KBM-7 (cell line): ENCODE measurements at regions of chr1 and their contacts with region 1.

Region 1: GRCh38 chr1:94061513-94062443 is 59.2 kb downstream of the ABCA4 start:
- DNase-seq: peak; percentile 75

Region 2: DNA sequence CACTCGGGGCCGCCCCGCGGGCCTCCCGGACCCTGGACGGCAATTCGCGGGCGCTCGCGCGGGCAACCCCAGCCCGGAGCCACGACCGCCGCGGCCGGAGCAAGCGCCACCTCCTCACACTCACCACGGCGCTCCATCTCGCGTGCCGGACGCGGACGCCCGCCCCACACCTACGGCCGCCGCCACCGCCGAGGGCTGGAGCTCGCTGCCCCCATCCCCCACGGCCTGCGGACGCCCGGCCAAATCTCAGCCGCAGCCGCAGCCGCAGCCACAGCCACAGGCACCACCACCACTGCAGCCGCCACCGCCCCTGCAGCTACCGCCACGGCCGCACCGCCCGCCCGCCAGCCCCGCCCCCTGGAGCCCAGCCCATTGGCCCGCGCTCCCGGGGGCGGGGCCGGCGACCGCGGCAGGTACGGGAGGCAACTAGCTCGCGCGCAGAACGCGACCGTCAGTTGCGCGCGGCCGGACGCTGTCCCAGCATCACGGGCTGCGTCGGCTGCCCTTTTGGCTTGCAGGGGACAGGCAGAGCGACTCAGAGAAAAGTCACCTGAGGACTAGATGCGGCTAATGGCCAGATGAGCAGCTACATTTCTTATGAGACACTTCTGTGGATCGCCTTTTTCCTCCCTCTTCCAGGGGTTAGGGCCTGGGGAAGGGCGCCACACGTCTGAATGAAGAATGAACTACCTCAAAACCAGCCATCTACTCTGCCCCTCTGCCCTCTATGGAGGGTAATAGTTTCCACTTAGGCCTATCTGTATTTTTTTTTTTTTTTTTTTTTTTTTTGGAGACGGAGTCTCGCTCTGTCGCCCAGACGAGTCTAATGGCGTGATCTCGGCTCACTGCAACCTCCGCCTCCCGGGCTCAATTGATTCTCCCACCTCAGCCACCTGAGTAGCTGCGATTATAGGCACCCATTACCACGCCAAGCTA is 175.8 kb after region 1 on chr1 and contains the start of gene ARHGAP29:
- in situ Hi-C with region 1: loop called (anchors 25 kb)
- DNase-seq: peak; percentile 58

Region 3: DNA sequence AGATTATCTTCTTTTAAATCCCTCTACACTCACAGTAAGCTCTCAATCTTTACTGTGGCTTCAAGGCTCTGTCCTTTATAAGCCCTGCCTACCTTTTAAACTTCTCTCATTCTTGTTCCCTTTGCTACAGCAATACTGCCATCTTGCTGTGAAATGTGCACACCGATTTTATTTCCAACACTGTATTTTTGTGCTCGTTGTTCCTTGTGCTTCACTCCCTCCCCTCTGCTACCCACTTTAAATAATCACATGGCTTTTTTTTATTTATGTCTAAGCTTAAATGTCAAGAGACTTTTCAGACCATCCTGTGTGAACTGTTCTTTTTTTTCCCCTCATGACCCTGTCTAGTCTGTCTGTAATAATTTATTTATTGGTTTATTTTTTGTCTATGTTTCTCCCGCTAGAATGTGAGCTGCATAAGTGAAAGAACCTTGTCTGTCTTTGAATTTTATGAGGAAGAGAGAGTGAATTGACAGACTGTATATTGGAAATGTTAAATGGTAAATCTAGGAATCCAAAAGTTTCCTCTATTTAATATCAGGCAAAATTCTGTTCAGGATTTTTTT is 402.1 kb after region 1 on chr1:
- in situ Hi-C with region 1: loop called (anchors 25 kb)
- DNase-seq: peak; percentile 83